ENCODE measurements at regions of chr4 and their contacts with region 1.

Region 1: DNA sequence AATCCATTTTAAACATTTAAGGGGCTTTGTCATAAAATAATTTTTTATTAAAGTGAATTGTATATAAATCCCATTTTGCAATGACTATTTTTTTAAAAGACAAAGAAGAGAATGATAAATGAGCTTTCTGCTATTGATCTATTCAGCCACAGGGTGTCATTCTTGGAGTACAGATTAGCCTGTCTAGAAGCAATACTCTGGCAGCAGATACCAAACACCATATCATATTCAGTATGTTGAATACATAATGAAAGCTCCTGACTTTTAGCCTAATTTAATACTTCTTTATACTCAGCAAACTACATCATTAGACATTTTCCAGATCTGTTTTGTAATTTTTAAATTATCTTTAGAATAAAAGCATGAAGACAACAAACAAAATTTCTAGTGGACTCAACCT is 496.3 kb downstream of the PDGFC start:
- DNase-seq: no peak
- ATAC-seq: peak; percentile 66 to 85
- H3K4me3 ChIP-seq: no peak overlapping the region
- H3K27ac ChIP-seq: no peak overlapping the region
- H3K4me1 ChIP-seq: no peaks in the 10 kb centered on the region
- H3K27me3 ChIP-seq: no peaks in the 10 kb centered on the region
- CTCF ChIP-seq: peak; percentile 48

Region 2: GRCh38 chr4:157045507-157046127 is 570.3 kb after region 1 on chr4:
- intact Hi-C with region 1: loop called (anchors 10 kb)
- DNase-seq: no peak
- ATAC-seq: peak; percentile 92 to 94
- H3K4me3 ChIP-seq: no peak overlapping the region
- H3K27ac ChIP-seq: no peak overlapping the region
- H3K4me1 ChIP-seq: no peaks in the 10 kb centered on the region
- H3K27me3 ChIP-seq: no peaks in the 10 kb centered on the region
- CTCF ChIP-seq: peak; percentile 74

Region 3: DNA sequence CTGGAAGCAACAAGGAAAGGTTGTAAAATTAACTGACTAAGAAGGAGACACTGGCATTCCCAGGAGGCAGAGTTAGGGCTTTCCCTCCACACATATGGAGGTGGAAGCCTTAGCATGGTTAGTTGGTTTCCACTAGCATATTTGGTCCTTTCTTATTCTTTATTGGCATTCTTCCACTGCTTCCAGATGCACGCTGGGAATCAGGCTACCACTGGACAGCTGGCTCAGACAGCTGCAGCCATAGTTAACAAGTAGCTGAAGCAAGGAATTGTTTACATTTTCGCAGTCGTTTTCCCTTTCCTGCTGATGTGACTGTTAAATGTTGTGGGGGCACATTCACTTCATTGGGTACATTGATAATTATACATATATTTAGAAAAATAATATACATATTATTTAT is 914.4 kb after region 1 on chr4:
- intact Hi-C with region 1: no loop called
- DNase-seq: no peak
- ATAC-seq: no peak
- H3K4me3 ChIP-seq: no peak overlapping the region
- H3K27ac ChIP-seq: no peak overlapping the region
- H3K4me1 ChIP-seq: no peaks in the 10 kb centered on the region
- H3K27me3 ChIP-seq: no peaks in the 10 kb centered on the region
- CTCF ChIP-seq: no peak

Measured in lower lobe of right lung (tissue), 2 donors.